Mammary epithelial cell (primary cell): ENCODE measurements at regions of chr11 and their contacts with region 1.

Region 1: DNA sequence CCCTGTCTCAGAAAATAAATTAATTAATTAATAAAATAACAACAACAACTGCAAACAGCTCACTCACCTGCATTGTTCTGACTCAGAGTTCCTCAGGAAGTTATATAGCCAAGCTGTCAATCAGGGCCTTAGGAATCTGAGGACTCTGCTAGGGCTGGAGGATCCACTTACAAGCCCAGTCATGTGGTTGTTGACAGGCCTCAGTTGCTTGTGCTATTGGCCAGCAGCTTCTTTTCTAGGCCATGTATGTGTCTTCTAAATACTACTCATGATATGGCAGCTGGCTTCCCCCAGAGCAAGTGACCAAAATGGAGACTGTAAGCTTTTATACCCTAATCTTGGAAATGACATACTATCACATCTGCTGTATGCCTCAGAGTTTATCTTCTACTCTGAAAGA is 20.8 kb upstream of the ATP5MG start:
- DNase-seq: peak; percentile 40
- H3K4me3 ChIP-seq: no peak overlapping the region
- H3K27ac ChIP-seq: no peak overlapping the region
- H3K4me1 ChIP-seq: peaks cover 7% of the 10 kb centered on the region
- H3K27me3 ChIP-seq: no peaks in the 10 kb centered on the region
- CTCF ChIP-seq: no peak

Region 2: DNA sequence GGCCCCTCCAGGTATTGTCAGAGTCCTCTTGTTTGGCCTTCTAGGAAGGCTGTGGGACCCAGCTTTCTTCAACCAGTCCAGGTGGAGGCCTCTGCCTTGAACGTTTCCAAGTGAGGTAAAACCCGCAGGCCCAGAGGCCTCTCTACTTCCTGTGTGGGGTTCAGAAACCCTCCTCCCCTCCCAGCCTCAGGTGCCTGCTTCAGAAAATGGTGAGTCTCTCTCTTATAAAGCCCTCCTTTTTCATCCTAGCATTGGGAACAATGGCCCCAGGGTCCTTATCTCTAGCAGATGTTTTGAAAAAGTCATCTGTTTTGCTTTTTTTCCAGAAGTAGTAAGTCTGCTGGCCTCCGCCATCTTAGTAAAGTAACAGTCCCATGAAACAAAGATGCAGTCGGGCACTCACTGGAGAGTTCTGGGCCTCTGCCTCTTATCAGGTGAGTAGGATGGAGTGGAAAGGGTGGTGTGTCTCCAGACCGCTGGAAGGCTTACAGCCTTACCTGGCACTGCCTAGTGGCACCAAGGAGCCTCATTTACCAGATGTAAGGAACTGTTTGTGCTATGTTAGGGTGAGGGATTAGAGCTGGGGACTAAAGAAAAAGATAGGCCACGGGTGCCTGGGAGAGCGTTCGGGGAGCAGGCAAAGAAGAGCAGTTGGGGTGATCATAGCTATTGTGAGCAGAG is 75.9 kb before region 1 on chr11 and contains the start of gene CD3E:
- CTCF ChIA-PET with region 1: no interaction called
- dilution Hi-C with region 1: loop called (anchors 5 kb)
- in situ Hi-C with region 1: no loop called
- intact Hi-C with region 1: no loop called
- DNase-seq: no peak
- H3K4me3 ChIP-seq: no peak within 1 kb of the TSS
- H3K27ac ChIP-seq: no peak within 1 kb of the TSS
- H3K4me1 ChIP-seq: no peaks in the 10 kb centered on the region
- H3K27me3 ChIP-seq: no peaks in the 10 kb centered on the region
- CTCF ChIP-seq: no peak
- total RNA-seq, gene CD3E: not detected

Region 3: DNA sequence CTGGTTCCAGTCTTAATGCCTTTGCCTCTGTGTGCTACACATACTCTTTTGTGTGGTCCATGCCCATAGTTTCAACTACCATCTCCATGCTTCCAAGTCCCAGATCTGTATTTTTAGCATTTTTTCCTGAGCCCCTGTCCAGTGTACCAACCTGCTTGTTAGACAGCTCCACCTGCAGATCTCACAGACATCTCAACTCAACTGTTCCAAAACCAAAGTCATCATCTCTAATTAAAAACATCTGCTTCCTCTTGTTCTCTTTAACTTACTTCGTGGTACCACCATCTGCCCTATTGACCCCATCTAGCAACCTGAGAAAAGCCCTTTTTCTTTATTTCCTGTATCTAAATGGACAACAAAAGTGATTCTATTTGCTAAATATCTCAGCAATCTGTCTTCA is 47.1 kb after region 1 on chr11:
- CTCF ChIA-PET with region 1: no interaction called
- dilution Hi-C with region 1: loop called (anchors 5 kb)
- in situ Hi-C with region 1: no loop called
- intact Hi-C with region 1: no loop called
- DNase-seq: no peak
- H3K4me3 ChIP-seq: no peak overlapping the region
- H3K27ac ChIP-seq: no peak overlapping the region
- H3K4me1 ChIP-seq: peaks cover 11% of the 10 kb centered on the region
- H3K27me3 ChIP-seq: no peaks in the 10 kb centered on the region
- CTCF ChIP-seq: no peak

Region 4: DNA sequence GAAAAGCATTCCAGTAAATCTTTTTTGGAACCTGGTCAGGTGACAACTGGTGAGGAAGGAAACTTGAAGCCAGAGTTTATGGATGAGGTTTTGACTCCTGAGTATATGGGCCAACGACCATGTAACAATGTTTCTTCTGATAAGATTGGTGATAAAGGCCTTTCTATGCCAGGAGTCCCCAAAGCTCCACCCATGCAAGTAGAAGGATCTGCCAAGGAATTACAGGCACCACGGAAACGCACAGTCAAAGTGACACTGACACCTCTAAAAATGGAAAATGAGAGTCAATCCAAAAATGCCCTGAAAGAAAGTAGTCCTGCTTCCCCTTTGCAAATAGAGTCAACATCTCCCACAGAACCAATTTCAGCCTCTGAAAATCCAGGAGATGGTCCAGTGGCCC is 122.6 kb after region 1 on chr11:
- CTCF ChIA-PET with region 1: no interaction called
- dilution Hi-C with region 1: no loop called
- in situ Hi-C with region 1: loop called (anchors 10 to 25 kb)
- intact Hi-C with region 1: no loop called
- DNase-seq: no peak
- H3K4me3 ChIP-seq: no peak overlapping the region
- H3K27ac ChIP-seq: no peak overlapping the region
- H3K4me1 ChIP-seq: no peaks in the 10 kb centered on the region
- H3K27me3 ChIP-seq: no peaks in the 10 kb centered on the region
- CTCF ChIP-seq: no peak